Sigmoid colon (tissue), 7 donors: ENCODE measurements at regions of chr22 and their contacts with region 1.

Region 1: GRCh38 chr22:40177738-40178416 is at the start of gene TNRC6B:
- DNase-seq: peak; percentile 88
- H3K4me3 ChIP-seq: peak within 1 kb of the TSS; percentile 52 to 71 (median 54)
- H3K27ac ChIP-seq: peak within 1 kb of the TSS; percentile 80 to 90 (median 81)
- H3K4me1 ChIP-seq: peaks cover 0 to 65% (median 59%) of the 10 kb centered on the region in 4 donors
- H3K27me3 ChIP-seq: no peaks in the 10 kb centered on the region
- CTCF ChIP-seq: no peak
- EP300 ChIP-seq: peak in 1 of 4 donors; percentile 26
- POLR2A ChIP-seq: peak; percentile 98
- total RNA-seq, gene TNRC6B: 26.5 to 51.8 (median 28.1) TPM

Region 2: GRCh38 chr22:40044102-40044869 is 133.6 kb before region 1 on chr22:
- intact Hi-C with region 1: loop called (anchors 5 kb)
- DNase-seq: peak; percentile 99
- H3K4me3 ChIP-seq: peak overlapping the region; percentile 82 to 89 (median 88)
- H3K27ac ChIP-seq: peak overlapping the region; percentile 92 to 96 (median 94)
- H3K4me1 ChIP-seq: peaks cover 0 to 34% (median 26%) of the 10 kb centered on the region in 4 donors
- H3K27me3 ChIP-seq: peaks cover 0 to 9% (median under 1%) of the 10 kb centered on the region in 3 donors
- CTCF ChIP-seq: no peak
- EP300 ChIP-seq: no peak
- POLR2A ChIP-seq: peak; percentile 53 to 63

Region 3: DNA sequence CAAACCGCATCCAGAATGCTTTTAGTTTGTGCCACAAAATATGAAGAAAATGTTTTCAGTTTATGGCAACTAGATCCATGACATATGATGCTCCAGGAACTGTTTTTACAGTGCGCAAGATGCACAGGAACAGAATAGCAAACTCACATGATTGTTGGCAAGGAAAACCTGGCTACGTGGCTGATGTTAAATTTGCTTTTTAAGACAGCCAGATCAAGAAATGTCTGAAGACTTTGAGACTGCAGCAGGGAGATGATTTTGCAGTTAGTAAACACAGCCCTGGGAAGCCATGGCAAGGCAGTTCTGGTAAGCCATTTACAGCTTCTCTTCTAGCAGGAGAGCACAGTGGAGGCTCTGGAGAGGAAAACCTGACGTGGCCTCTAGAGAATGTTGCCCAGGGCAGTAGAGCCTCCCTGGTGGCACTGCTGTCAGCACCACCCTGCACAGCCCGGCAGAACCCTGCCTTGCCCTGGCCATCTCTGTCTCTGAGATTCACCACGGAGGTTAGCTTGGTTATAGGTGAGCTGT is 70.0 kb before region 1 on chr22:
- intact Hi-C with region 1: loop called (anchors 10 kb)
- DNase-seq: no peak
- H3K4me3 ChIP-seq: peak overlapping the region in 3 of 4 donors; percentile 25 to 38 (median 37)
- H3K27ac ChIP-seq: peak overlapping the region; percentile 53 to 85 (median 71)
- H3K4me1 ChIP-seq: peaks cover 0 to 42% (median 18%) of the 10 kb centered on the region in 4 donors
- H3K27me3 ChIP-seq: no peaks in the 10 kb centered on the region
- CTCF ChIP-seq: no peak
- EP300 ChIP-seq: no peak
- POLR2A ChIP-seq: no peak

Region 4: GRCh38 chr22:40220316-40221054 is 42.6 kb after region 1 on chr22:
- intact Hi-C with region 1: loop called (anchors 5 kb)
- DNase-seq: no peak
- H3K4me3 ChIP-seq: no peak overlapping the region
- H3K27ac ChIP-seq: peak overlapping the region; percentile 61 to 84 (median 73)
- H3K4me1 ChIP-seq: peaks cover 0 to 71% (median 58%) of the 10 kb centered on the region in 4 donors
- H3K27me3 ChIP-seq: no peaks in the 10 kb centered on the region
- CTCF ChIP-seq: no peak
- EP300 ChIP-seq: no peak
- POLR2A ChIP-seq: no peak

Region 5: GRCh38 chr22:40346178-40347118 is 168.6 kb after region 1 on chr22 and contains the start of gene ADSL:
- intact Hi-C with region 1: loop called (anchors 2 kb)
- DNase-seq: peak; percentile 93
- H3K4me3 ChIP-seq: peak within 1 kb of the TSS; percentile 67 to 73 (median 69)
- H3K27ac ChIP-seq: peak within 1 kb of the TSS; percentile 87 to 90 (median 89)
- H3K4me1 ChIP-seq: peaks cover 0 to 24% (median 21%) of the 10 kb centered on the region in 4 donors
- H3K27me3 ChIP-seq: no peaks in the 10 kb centered on the region
- CTCF ChIP-seq: no peak
- EP300 ChIP-seq: no peak
- POLR2A ChIP-seq: peak; percentile 77 to 79
- total RNA-seq, gene ADSL: 86.7 to 469 (median 111) TPM